ENCODE measurements at regions of chr15 and their contacts with region 1.

Region 1: DNA sequence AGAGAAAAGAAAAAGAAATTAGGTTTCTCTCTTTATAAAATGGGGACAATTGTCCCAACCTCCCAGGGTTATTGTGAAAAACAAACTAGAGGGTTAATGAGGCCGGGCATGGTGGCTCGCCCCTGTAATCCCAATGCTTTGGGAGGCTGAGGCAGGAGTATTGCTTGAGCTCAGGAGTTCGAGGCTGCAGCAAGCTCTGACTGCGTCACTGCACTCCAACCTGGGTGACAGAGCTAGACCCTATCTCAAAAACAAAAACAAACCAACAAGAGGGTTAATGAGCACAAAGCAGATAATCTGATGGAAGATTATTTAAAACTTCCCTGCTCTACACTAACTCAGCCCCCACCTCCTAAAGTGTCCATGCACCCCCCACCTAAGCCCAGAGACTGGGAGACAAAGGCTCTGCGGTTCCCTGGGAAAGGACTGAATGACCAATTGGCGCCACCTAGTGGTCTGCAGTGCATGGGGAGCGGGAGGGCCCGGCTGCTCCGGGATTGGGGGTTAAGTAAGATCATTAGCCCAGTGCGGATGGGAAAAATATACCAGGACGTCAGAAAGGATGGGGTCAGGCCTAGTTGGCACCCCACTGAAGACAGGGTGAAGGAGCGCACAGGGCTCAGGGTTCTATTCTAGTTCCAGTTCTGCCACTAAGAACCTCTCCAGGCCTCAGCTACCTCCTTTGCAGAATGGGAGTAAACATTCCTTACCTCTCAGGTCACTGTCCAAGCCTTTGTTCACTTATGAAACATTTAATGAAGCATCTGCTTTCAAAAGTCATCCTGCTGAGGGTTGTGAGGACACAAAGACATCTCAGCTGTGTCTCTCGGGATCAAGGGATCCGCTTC is 15.6 kb downstream of the PIF1 start:
- DNase-seq: peak; percentile 92

Region 2: GRCh38 chr15:64740311-64741170 is 69.3 kb before region 1 on chr15:
- intact Hi-C with region 1: loop called (anchors 2 kb)
- DNase-seq: no peak

Measured in cardiac septum (tissue), 1 donor.